GM12878 (cell line): ENCODE measurements at regions of chr9 and their contacts with region 1.

Region 1: GRCh38 chr9:84781458-84781857 is 111.9 kb downstream of the NTRK2 start:
- DNase-seq: no peak
- ATAC-seq: peak; percentile 71
- H3K4me3 ChIP-seq: no peak overlapping the region
- H3K27ac ChIP-seq: no peak overlapping the region
- H3K4me1 ChIP-seq: peaks cover 20% of the 10 kb centered on the region
- H3K27me3 ChIP-seq: no peaks in the 10 kb centered on the region
- CTCF ChIP-seq: peak; percentile 48 to 63 (median 52)
- EP300 ChIP-seq: no peak
- POLR2A ChIP-seq: no peak
- RAD21 ChIP-seq: peak; percentile 86

Region 2: DNA sequence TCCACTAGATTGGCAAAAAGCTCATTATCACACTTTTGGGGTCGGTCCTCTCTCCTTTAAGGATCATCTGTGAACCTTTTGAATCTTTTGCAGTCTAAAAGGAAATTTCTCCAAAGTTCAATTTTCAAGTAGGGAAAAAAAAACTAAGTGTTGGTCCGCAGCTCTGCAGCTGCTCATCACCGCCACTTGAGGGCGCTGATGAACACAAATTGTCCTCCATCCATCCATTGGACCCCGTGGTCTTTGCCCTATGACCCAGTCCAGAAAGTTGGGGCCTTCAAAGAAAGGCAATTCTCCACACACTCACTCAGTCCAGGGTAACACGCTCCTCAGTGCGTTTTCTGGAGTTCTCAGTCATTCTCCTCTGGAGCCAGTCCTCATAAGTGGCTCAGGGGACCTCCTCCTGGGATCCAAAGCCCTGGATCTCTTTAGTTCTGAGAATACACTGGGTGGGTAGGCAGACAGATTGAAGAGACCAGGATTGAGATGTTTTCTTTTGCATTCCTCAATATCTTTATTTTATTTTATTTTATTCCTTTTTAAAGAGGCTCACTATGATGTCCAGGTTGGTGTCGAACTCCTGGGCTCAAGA is 377.3 kb before region 1 on chr9:
- CTCF ChIA-PET with region 1: interaction called, 20 read pairs
- POLR2A ChIA-PET with region 1: no interaction called
- RAD21 ChIA-PET with region 1: interaction called, 4 read pairs
- SMC1A ChIA-PET with region 1: interaction called, 4 read pairs
- in situ Hi-C with region 1: loop called (anchors 5 kb)
- intact Hi-C with region 1: loop called (anchors 5 kb)
- DNase-seq: no peak
- ATAC-seq: peak; percentile 47; the same call in 2 of the 3 replicates
- H3K4me3 ChIP-seq: no peak overlapping the region
- H3K27ac ChIP-seq: no peak overlapping the region
- H3K4me1 ChIP-seq: no peaks in the 10 kb centered on the region
- H3K27me3 ChIP-seq: no peaks in the 10 kb centered on the region
- CTCF ChIP-seq: peak; percentile 67 to 76 (median 71)
- EP300 ChIP-seq: no peak
- POLR2A ChIP-seq: no peak
- RAD21 ChIP-seq: peak; percentile 59

Region 3: GRCh38 chr9:84691634-84692033 is 89.8 kb before region 1 on chr9:
- CTCF ChIA-PET with region 1: interaction called, 792 read pairs
- POLR2A ChIA-PET with region 1: interaction called, 32 read pairs
- RAD21 ChIA-PET with region 1: interaction called, 582 read pairs
- SMC1A ChIA-PET with region 1: interaction called, 686 read pairs
- in situ Hi-C with region 1: loop called (anchors 5 kb)
- intact Hi-C with region 1: no loop called
- DNase-seq: no peak
- ATAC-seq: no peak
- H3K4me3 ChIP-seq: no peak overlapping the region
- H3K27ac ChIP-seq: no peak overlapping the region
- H3K4me1 ChIP-seq: peaks cover 10% of the 10 kb centered on the region
- H3K27me3 ChIP-seq: no peaks in the 10 kb centered on the region
- CTCF ChIP-seq: no peak
- EP300 ChIP-seq: no peak
- POLR2A ChIP-seq: no peak
- RAD21 ChIP-seq: no peak

Region 4: GRCh38 chr9:84718476-84718875 is 63.0 kb before region 1 on chr9:
- CTCF ChIA-PET with region 1: interaction called, 5 read pairs
- POLR2A ChIA-PET with region 1: no interaction called
- RAD21 ChIA-PET with region 1: interaction called, 14 read pairs
- SMC1A ChIA-PET with region 1: interaction called, 8 read pairs
- in situ Hi-C with region 1: no loop called
- intact Hi-C with region 1: no loop called
- DNase-seq: no peak
- ATAC-seq: no peak
- H3K4me3 ChIP-seq: no peak overlapping the region
- H3K27ac ChIP-seq: no peak overlapping the region
- H3K4me1 ChIP-seq: no peaks in the 10 kb centered on the region
- H3K27me3 ChIP-seq: no peaks in the 10 kb centered on the region
- CTCF ChIP-seq: no peak
- EP300 ChIP-seq: no peak
- POLR2A ChIP-seq: no peak
- RAD21 ChIP-seq: no peak

Region 5: GRCh38 chr9:84748112-84748511 is 33.3 kb before region 1 on chr9:
- CTCF ChIA-PET with region 1: interaction called, 55 read pairs
- POLR2A ChIA-PET with region 1: interaction called, 4 read pairs
- RAD21 ChIA-PET with region 1: interaction called, 101 read pairs
- SMC1A ChIA-PET with region 1: interaction called, 204 read pairs
- in situ Hi-C with region 1: no loop called
- intact Hi-C with region 1: loop called (anchors 5 kb)
- DNase-seq: peak; percentile 66
- ATAC-seq: peak; percentile 73
- H3K4me3 ChIP-seq: no peak overlapping the region; the same call in 1 of the 2 replicates
- H3K27ac ChIP-seq: peak overlapping the region; percentile 73
- H3K4me1 ChIP-seq: peaks cover 42% of the 10 kb centered on the region
- H3K27me3 ChIP-seq: no peaks in the 10 kb centered on the region
- CTCF ChIP-seq: no peak
- EP300 ChIP-seq: peak; percentile 51 to 71; a peak in 2 of 4 replicates
- POLR2A ChIP-seq: no peak
- RAD21 ChIP-seq: no peak

Region 6: DNA sequence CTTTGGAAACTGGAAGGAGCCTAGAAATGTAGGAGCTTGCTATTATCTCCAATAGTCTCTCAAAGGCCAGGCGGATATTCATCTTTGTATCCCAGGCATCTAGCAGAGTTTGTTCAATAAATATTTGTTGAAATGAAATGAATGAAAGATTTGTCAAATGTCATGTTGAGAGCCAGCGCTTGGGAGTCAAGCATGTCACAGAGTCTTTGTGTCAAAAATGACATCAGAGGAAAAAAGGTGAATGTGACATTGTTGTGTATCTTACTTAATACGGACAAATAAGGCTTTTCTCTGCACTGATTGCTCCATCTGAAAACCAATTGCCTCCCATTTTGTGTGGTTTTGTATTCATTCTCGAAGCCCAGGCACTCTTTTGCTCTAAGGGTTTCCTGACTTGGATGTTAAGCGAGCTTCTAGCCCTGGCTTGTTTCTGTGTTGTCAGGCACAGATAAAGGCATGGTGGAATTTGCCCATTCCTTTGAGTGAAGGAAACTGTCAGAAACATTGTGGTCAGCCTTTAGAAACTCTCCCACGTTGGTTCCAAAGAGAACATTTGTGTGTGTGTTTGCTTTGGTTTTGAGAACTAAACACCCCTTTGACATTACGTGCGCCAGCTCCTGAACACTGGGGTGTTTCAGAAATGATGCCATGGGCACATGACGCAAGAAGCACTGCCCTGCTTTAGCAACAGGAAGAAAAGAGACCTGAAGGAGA is 208.8 kb after region 1 on chr9:
- CTCF ChIA-PET with region 1: no interaction called
- POLR2A ChIA-PET with region 1: no interaction called
- RAD21 ChIA-PET with region 1: no interaction called
- SMC1A ChIA-PET with region 1: no interaction called
- in situ Hi-C with region 1: no loop called
- intact Hi-C with region 1: no loop called
- DNase-seq: no peak
- ATAC-seq: no peak
- H3K4me3 ChIP-seq: no peak overlapping the region
- H3K27ac ChIP-seq: no peak overlapping the region
- H3K4me1 ChIP-seq: no peaks in the 10 kb centered on the region
- H3K27me3 ChIP-seq: no peaks in the 10 kb centered on the region; a peak in 1 of 4 replicates
- CTCF ChIP-seq: no peak
- EP300 ChIP-seq: no peak
- POLR2A ChIP-seq: no peak
- RAD21 ChIP-seq: no peak

Region 7: GRCh38 chr9:85142968-85143367 is 361.5 kb after region 1 on chr9:
- CTCF ChIA-PET with region 1: interaction called, 36 read pairs
- POLR2A ChIA-PET with region 1: no interaction called
- RAD21 ChIA-PET with region 1: interaction called, 9 read pairs
- SMC1A ChIA-PET with region 1: interaction called, 9 read pairs
- in situ Hi-C with region 1: no loop called
- intact Hi-C with region 1: loop called (anchors 5 kb)
- DNase-seq: peak; percentile 16
- ATAC-seq: peak; percentile 84
- H3K4me3 ChIP-seq: no peak overlapping the region
- H3K27ac ChIP-seq: no peak overlapping the region
- H3K4me1 ChIP-seq: no peaks in the 10 kb centered on the region
- H3K27me3 ChIP-seq: peaks cover 0 to 3% of the 10 kb centered on the region in 2 experiments; a peak in 1 of 4 replicates
- CTCF ChIP-seq: peak; percentile 63 to 81 (median 76)
- EP300 ChIP-seq: no peak
- POLR2A ChIP-seq: no peak
- RAD21 ChIP-seq: peak; percentile 87